Calu3 (cell line): ENCODE measurements at regions of chr15 and their contacts with region 1.

Region 1: GRCh38 chr15:70097337-70098169 is at the start of gene TLE3:
- DNase-seq: peak; percentile 99
- H3K4me3 Mint-ChIP-seq: peak within 1 kb of the TSS; percentile 97
- H3K27ac Mint-ChIP-seq: peak within 1 kb of the TSS; percentile 96
- H3K4me1 Mint-ChIP-seq: peaks cover 48% of the 10 kb centered on the region
- H3K27me3 Mint-ChIP-seq: peaks cover 2% of the 10 kb centered on the region
- CTCF ChIP-seq: no peak
- total RNA-seq, gene TLE3: 53.5 and 54.8 TPM in 2 replicates

Region 2: GRCh38 chr15:69593981-69594966 is 503.3 kb before region 1 on chr15:
- CTCF ChIA-PET with region 1: interaction called, 5 read pairs
- intact Hi-C with region 1: loop called (anchors 5 kb)
- DNase-seq: peak; percentile 97
- H3K4me3 Mint-ChIP-seq: peak overlapping the region; percentile 51
- H3K27ac Mint-ChIP-seq: peak overlapping the region; percentile 57
- H3K4me1 Mint-ChIP-seq: peaks cover 52% of the 10 kb centered on the region
- H3K27me3 Mint-ChIP-seq: peaks cover 65% of the 10 kb centered on the region
- CTCF ChIP-seq: no peak

Region 3: DNA sequence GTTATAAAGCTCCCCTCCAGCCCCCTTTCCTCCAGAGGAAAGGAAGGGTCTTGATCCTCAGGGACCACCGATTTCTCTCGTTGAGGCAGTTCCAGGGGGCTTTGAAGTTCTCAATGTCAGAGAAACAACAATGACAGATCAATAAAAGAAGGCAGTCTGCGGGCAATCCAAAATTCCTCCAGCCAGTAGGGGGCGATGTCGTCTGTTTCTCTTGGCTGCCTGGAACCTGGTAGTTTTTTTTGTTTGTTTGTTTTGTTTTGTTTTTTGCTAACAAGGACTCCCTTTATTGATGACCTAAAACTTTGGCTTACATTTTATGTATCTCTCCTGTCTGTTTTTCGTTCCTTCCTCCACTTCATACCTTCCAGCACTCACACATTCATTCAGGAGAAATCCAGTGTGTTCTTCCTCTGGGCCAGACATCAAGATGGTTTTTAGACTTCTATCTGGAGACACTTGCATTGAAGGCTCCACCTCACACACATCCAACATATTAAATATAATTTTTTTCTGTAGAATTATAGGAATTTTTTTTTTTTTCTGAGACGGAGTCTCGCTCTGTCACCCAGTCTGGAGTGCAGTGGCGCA is 368.3 kb before region 1 on chr15:
- CTCF ChIA-PET with region 1: no interaction called
- intact Hi-C with region 1: loop called (anchors 10 kb)
- DNase-seq: peak; percentile 75
- H3K4me3 Mint-ChIP-seq: no peak overlapping the region
- H3K27ac Mint-ChIP-seq: no peak overlapping the region
- H3K4me1 Mint-ChIP-seq: peaks cover 14% of the 10 kb centered on the region
- H3K27me3 Mint-ChIP-seq: peaks cover 47% of the 10 kb centered on the region
- CTCF ChIP-seq: peak; percentile 75

Region 4: DNA sequence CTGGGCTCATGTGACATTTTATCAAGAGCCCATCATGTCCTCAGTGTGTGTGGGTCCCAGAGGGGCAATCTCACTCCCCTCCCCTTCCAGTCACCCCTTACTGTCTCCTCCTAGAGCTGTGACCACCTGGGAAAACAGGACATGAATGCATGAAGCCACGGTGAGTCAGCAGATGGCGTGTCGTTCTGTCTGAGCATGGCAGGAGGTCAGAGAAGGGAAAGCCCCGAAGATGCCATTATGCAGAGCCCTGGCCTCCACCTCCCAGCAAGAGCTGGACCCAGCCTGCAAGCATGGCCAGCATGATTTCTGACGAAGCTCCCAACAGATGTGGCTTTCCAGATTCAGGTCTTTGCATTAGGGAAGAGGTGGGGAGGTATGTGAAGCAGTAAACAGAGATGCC is 118.3 kb before region 1 on chr15:
- CTCF ChIA-PET with region 1: no interaction called
- intact Hi-C with region 1: no loop called
- DNase-seq: peak; percentile 57
- H3K4me3 Mint-ChIP-seq: no peak overlapping the region
- H3K27ac Mint-ChIP-seq: no peak overlapping the region
- H3K4me1 Mint-ChIP-seq: peaks cover 13% of the 10 kb centered on the region
- H3K27me3 Mint-ChIP-seq: peaks cover 87% of the 10 kb centered on the region
- CTCF ChIP-seq: no peak

Region 5: DNA sequence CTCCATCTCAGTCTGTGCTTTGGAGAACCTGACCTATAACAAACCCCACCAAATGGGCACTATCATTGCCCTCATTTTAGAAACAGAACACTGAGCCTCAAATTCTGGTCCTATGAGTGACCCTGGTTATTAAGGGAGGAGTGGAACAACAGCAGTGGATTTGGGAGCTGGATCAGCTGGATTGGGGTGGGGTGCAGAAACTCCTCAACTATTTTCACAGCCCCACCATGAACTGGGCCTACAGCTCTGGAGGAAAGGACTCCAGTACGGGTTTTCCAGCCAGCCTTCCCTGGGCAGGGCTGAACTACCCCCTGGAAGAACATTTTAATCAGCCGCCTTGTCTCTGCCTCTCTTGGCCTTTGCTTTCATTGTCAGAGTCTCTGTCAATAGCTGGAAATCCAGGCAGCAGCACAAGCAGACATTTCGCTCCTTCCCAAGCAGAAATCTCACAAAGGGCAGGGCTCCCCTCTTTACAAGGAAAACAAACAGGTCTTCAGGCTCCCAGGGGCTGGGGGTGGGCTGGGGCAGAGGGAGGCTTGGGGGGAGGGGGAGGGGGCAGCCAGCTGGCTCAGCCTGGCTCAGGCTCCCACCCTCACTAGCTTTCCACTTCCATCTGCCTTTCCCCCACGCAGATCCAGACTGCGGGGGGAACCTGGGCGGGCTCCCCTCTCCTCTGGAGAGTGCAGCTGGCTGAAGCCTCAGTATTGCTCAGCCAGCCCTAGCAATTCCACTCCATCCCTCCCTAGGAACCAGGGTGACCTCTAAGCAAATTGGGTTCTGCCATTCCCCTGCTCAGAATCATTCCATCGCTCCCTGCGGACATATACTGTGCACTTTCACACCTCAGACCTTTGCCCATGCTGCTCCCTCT is 13.9 kb after region 1 on chr15:
- CTCF ChIA-PET with region 1: interaction called, 3 read pairs
- intact Hi-C with region 1: loop called (anchors 1 kb)
- DNase-seq: peak; percentile 72
- H3K4me3 Mint-ChIP-seq: peak overlapping the region; percentile 12
- H3K27ac Mint-ChIP-seq: peak overlapping the region; percentile 29
- H3K4me1 Mint-ChIP-seq: peaks cover 18% of the 10 kb centered on the region
- H3K27me3 Mint-ChIP-seq: peaks cover 44% of the 10 kb centered on the region
- CTCF ChIP-seq: no peak

Region 6: GRCh38 chr15:70362886-70363285 is 265.3 kb after region 1 on chr15:
- CTCF ChIA-PET with region 1: interaction called, 3 read pairs
- intact Hi-C with region 1: loop called (anchors 5 kb)
- DNase-seq: peak; percentile 71
- H3K4me3 Mint-ChIP-seq: no peak overlapping the region
- H3K27ac Mint-ChIP-seq: no peak overlapping the region
- H3K4me1 Mint-ChIP-seq: no peaks in the 10 kb centered on the region
- H3K27me3 Mint-ChIP-seq: peaks cover 39% of the 10 kb centered on the region
- CTCF ChIP-seq: peak; percentile 67

Region 7: GRCh38 chr15:70488002-70488605 is 390.6 kb after region 1 on chr15:
- CTCF ChIA-PET with region 1: interaction called, 4 read pairs
- intact Hi-C with region 1: loop called (anchors 10 kb)
- DNase-seq: peak; percentile 86
- H3K4me3 Mint-ChIP-seq: no peak overlapping the region
- H3K27ac Mint-ChIP-seq: no peak overlapping the region
- H3K4me1 Mint-ChIP-seq: peaks cover 45% of the 10 kb centered on the region
- H3K27me3 Mint-ChIP-seq: peaks cover 4% of the 10 kb centered on the region
- CTCF ChIP-seq: peak; percentile 95